ENCODE measurements at regions of chr19 and their contacts with region 1.

Region 1: GRCh38 chr19:7799640-7800355 is 30.2 kb upstream of the EVI5L start:
- DNase-seq: peak; percentile 35
- ATAC-seq: peak; percentile 76
- H3K4me3 Mint-ChIP-seq: peak overlapping the region; percentile 66
- H3K27ac Mint-ChIP-seq: peak overlapping the region; percentile 46
- H3K4me1 Mint-ChIP-seq: peaks cover 13% of the 10 kb centered on the region
- H3K27me3 Mint-ChIP-seq: peaks cover 13% of the 10 kb centered on the region
- CTCF ChIP-seq: no peak

Region 2: DNA sequence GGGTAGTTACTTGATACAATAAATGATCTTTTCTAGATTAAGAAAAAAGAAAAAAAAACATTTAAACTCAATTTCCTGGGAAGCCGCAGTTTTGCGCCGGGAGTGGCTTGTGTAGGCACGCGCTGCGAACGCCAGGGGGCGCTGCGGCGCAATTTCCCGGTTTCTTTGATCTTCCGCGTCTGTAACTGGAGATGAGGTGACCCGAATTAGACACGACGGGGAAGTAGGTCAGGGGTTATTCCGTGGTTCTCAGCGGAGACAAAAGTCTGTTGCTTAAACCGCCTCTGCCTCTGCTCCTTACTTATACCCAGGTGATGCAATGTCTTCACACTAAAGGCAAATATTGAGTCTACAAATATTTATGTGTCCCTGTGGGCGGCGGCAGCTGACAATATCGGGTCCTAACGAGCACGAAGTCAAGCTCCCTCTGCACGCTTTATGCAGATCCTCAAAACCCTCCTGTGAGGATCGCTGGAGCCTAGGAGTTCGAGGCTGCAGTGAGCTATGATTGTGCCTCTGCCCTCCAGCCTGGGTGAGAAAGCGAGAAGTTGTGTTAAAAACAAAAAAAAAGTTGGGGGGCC is 147.6 kb before region 1 on chr19:
- CTCF ChIA-PET with region 1: interaction called, 37 read pairs
- POLR2A ChIA-PET with region 1: interaction called, 18 read pairs
- intact Hi-C with region 1: loop called (anchors 1 kb)
- DNase-seq: peak; percentile 82
- ATAC-seq: peak; percentile 87
- H3K4me3 Mint-ChIP-seq: peak overlapping the region; percentile 78
- H3K27ac Mint-ChIP-seq: peak overlapping the region; percentile 41
- H3K4me1 Mint-ChIP-seq: peaks cover 8% of the 10 kb centered on the region
- H3K27me3 Mint-ChIP-seq: no peaks in the 10 kb centered on the region
- CTCF ChIP-seq: peak; percentile 81

Region 3: GRCh38 chr19:7705387-7706187 is 94.2 kb before region 1 on chr19:
- CTCF ChIA-PET with region 1: interaction called, 8 read pairs
- POLR2A ChIA-PET with region 1: interaction called, 10 read pairs
- intact Hi-C with region 1: no loop called
- DNase-seq: peak; percentile 78
- ATAC-seq: peak; percentile 38
- H3K4me3 Mint-ChIP-seq: peak overlapping the region; percentile 78
- H3K27ac Mint-ChIP-seq: peak overlapping the region; percentile 97
- H3K4me1 Mint-ChIP-seq: peaks cover 96% of the 10 kb centered on the region
- H3K27me3 Mint-ChIP-seq: no peaks in the 10 kb centered on the region
- CTCF ChIP-seq: no peak

Region 4: DNA sequence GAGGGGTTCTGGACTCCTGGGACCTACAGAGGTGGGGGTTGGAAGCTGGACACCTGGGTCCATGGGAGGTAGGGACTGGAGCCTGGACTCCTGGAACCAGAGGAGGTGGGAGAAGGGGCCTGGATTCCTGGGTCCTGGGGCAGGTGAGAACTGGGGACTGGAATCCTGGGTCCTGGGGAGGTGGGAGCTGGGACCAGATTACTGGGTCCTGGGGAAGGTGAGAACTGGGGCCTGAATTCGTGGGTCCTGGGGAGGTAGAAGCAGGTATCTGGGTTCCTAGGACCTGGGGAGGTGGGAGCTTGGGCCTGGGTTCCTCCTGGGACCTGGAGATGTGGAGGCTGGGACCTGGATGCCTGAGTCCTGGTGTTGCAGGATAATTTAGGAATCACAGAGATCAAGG is 36.1 kb before region 1 on chr19:
- CTCF ChIA-PET with region 1: no interaction called
- POLR2A ChIA-PET with region 1: interaction called, 10 read pairs
- intact Hi-C with region 1: no loop called
- DNase-seq: no peak
- ATAC-seq: no peak
- H3K4me3 Mint-ChIP-seq: no peak overlapping the region
- H3K27ac Mint-ChIP-seq: peak overlapping the region; percentile 69
- H3K4me1 Mint-ChIP-seq: peaks cover 19% of the 10 kb centered on the region
- H3K27me3 Mint-ChIP-seq: peaks cover 8% of the 10 kb centered on the region
- CTCF ChIP-seq: no peak

Measured in activated B cell treated with CpG ODN at 0.5 μM for 24 hours (primary cell).